Activated B cell treated with CpG ODN at 0.5 μM for 24 hours (primary cell): ENCODE measurements at regions of chr22 and their contacts with region 1.

Region 1: GRCh38 chr22:20130739-20131596 is 636 bp upstream of the ZDHHC8 start:
- DNase-seq: peak; percentile 75
- ATAC-seq: peak; percentile 83
- H3K4me3 Mint-ChIP-seq: peak overlapping the region; percentile 70
- H3K27ac Mint-ChIP-seq: no peak overlapping the region
- H3K4me1 Mint-ChIP-seq: peaks cover 34% of the 10 kb centered on the region
- H3K27me3 Mint-ChIP-seq: no peaks in the 10 kb centered on the region
- CTCF ChIP-seq: no peak

Region 2: GRCh38 chr22:19432133-19432851 is 698.7 kb before region 1 on chr22 and contains the start of gene MRPL40:
- CTCF ChIA-PET with region 1: no interaction called
- POLR2A ChIA-PET with region 1: no interaction called
- intact Hi-C with region 1: loop called (anchors 5 kb)
- DNase-seq: peak; percentile 83
- ATAC-seq: peak; percentile 87
- H3K4me3 Mint-ChIP-seq: peak within 1 kb of the TSS; percentile 90
- H3K27ac Mint-ChIP-seq: peak within 1 kb of the TSS; percentile 91
- H3K4me1 Mint-ChIP-seq: peaks cover 59% of the 10 kb centered on the region
- H3K27me3 Mint-ChIP-seq: no peaks in the 10 kb centered on the region
- CTCF ChIP-seq: no peak
- total RNA-seq, gene MRPL40: 24.0 and 24.3 TPM in 2 replicates

Region 3: DNA sequence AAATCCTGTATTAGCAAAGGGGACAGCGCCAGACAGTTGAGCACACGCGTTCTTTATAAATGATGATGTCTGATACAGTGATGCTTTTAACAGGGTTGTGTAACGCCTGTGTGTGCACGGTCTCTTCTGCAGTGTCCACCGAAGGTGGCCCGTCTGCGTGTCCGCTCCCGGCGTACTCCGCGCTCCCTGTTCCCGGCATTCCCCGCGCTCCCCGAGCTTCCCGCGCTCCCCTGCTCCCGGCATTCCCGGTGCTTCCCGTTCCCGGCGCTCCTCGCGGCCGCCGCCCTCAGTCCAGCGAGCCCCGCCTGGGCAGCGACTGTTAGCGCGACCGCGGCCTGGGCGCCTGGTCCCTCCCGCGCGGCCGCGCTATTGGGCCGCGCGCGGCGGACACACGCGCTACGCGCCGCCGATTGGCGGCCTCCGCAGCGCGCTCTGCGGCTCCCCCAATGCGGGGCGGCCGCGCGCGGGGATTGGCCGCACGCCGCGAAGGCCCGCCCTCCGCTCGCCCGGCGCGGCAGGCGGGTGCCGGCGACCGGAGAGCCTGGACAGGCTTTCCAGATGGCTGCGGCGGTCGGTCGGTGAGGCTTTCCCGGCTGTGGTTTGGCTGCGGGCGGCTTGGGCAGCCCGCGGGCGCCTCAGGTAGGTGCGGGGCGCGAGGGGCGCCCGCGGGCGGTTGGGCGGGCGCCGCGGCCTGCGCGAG is 51.1 kb before region 1 on chr22 and contains the start of gene DGCR8:
- CTCF ChIA-PET with region 1: no interaction called
- POLR2A ChIA-PET with region 1: no interaction called
- intact Hi-C with region 1: loop called (anchors 1 kb)
- DNase-seq: peak; percentile 83
- ATAC-seq: peak; percentile 97
- H3K4me3 Mint-ChIP-seq: peak within 1 kb of the TSS; percentile 90
- H3K27ac Mint-ChIP-seq: peak within 1 kb of the TSS; percentile 80
- H3K4me1 Mint-ChIP-seq: peaks cover 32% of the 10 kb centered on the region
- H3K27me3 Mint-ChIP-seq: no peaks in the 10 kb centered on the region
- CTCF ChIP-seq: no peak
- total RNA-seq, gene DGCR8: 34.6 and 35.5 TPM in 2 replicates

Region 4: GRCh38 chr22:20219667-20220628 is 89.0 kb after region 1 on chr22:
- CTCF ChIA-PET with region 1: no interaction called
- POLR2A ChIA-PET with region 1: no interaction called
- intact Hi-C with region 1: no loop called
- DNase-seq: no peak
- ATAC-seq: no peak
- H3K4me3 Mint-ChIP-seq: no peak overlapping the region
- H3K27ac Mint-ChIP-seq: no peak overlapping the region
- H3K4me1 Mint-ChIP-seq: no peaks in the 10 kb centered on the region
- H3K27me3 Mint-ChIP-seq: peaks cover 6% of the 10 kb centered on the region
- CTCF ChIP-seq: no peak

Region 5: DNA sequence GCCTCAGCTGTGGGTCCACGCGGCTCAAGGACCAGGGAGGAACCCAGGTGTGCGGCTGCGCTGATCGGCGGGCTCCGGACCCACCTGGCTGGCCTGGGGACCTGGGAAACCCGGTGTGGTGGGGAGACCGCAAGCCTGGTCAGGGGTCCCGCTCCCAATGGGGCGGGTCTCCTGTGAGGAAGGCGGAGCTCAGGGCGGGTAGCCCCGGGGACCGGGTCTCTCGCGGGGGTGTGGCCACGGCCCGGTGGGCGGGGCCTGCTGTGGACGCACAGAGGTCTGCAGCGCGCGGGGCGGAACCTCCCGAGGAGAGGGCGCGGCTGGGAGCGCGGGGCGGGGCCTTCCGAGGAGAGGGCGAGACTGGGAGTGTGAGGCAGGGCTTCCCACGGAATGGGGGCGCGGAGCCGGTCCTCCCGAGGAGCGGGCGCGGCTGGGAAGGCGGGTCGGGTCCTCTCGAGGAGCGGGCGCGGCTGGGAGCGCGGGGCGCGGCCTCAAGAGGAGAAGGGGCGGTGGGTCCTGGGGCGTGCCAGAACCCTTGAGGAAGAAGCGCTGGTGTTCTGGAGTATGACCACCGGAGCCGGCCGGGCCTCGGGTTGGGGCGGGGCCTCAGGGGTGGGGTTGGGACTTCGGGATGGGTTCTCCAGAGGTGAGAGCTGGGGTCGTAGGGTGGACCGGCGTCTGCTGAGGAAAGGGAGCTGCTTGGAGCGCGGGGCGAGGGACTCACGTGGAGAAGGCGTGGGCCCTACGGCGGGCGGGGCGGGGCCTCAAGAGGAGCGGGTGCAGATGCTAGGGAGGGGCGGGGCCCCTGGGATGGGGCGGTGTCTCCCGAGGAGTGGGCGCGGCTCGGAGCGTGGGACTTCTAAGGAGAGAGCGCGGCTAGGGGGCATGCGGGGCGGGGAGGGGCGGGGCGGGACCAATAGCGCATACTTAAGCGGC is 168.1 kb after region 1 on chr22:
- CTCF ChIA-PET with region 1: no interaction called
- POLR2A ChIA-PET with region 1: no interaction called
- intact Hi-C with region 1: loop called (anchors 1 kb)
- DNase-seq: peak; percentile 89
- ATAC-seq: peak; percentile 90
- H3K4me3 Mint-ChIP-seq: peak overlapping the region; percentile 86
- H3K27ac Mint-ChIP-seq: no peak overlapping the region
- H3K4me1 Mint-ChIP-seq: no peaks in the 10 kb centered on the region
- H3K27me3 Mint-ChIP-seq: peaks cover 7% of the 10 kb centered on the region
- CTCF ChIP-seq: no peak

Region 6: DNA sequence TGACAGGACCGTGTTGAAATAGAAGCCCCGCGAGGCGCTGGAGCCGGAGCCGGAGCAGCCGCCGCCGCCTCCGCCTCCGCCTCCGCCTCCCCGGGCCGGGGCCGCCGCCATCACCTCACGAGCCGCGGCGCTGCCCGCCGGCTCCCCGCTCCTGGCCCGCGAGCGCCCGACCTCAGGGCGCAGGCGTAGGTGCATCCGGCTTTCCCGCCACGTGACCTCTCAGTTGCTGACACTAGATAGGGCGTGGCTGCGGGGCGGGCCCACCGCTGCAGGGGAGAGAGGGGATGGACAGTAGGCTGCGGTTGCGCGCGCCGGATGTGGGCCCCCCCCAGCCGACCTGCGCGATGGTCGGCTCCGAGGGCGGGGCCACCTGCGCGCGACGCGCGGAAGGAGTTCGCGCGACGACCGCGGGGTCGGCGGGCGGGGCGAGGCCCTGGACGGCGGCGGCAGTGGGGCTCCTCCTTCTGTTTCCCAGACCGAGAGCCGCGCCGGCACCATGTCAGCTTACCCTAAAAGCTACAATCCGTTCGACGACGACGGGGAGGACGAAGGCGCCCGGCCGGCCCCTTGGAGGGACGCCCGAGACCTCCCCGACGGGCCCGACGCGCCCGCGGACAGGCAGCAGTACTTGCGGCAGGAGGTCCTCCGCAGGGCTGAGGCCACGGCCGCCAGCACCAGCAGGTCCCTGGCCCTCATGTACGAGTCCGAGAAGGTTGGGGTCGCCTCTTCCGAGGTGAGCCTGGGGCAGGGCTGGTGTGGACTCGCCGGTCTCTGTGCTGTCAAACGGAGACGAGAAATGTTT is 727.8 kb after region 1 on chr22 and contains the starts of genes PI4KA and SNAP29:
- CTCF ChIA-PET with region 1: no interaction called
- POLR2A ChIA-PET with region 1: no interaction called
- intact Hi-C with region 1: loop called (anchors 2 kb)
- DNase-seq: peak; percentile 97
- ATAC-seq: peak; percentile 93
- H3K4me3 Mint-ChIP-seq: peak within 1 kb of the TSS; percentile 89
- H3K27ac Mint-ChIP-seq: peak within 1 kb of the TSS; percentile 80
- H3K4me1 Mint-ChIP-seq: peaks cover 46% of the 10 kb centered on the region
- H3K27me3 Mint-ChIP-seq: no peaks in the 10 kb centered on the region
- CTCF ChIP-seq: no peak
- total RNA-seq, gene PI4KA: 101 and 114 TPM in 2 replicates
- total RNA-seq, gene SNAP29: 22.1 and 23.6 TPM in 2 replicates